ENCODE measurements at regions of chr7 and their contacts with region 1.

Region 1: DNA sequence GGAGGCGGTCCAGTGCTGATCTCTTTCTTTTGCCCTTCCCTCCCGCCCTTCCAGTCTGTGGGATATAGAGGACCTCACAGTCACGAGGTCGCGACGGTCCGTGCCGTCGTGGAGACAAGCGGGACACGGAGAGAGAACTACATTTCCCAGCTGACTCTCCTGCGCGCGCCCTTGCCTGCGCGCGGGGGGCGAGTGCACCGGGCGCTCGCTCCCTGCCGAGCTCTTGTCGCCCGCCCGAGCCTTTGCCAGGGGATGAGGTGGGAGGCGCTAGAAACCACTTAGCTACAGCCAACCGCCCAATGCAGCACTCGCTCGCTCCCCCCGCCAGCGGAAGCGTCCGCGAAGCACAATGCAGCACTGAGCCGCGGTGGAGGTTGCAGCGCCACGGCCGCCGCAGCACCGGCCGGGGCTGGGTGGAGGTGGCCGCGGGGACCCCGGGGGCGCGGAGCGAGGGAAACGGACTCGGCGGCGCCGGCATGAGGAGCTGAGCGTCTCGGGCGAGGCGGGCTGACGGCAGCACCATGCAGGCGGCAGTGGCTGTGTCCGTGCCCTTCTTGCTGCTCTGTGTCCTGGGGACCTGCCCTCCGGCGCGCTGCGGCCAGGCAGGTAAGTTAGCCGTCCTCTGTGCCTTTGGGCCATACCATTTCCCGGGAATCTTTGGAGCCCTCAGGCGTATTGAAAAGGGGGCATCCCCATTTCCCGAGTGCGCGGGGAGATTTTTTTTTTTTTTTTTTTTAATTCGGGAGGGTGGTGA is at the start of gene ADAM22:
- DNase-seq: peak; percentile 49 to 80 (median 74)
- ATAC-seq: peak; percentile 96
- H3K4me3 ChIP-seq: peak within 1 kb of the TSS; percentile 80
- H3K4me3 Mint-ChIP-seq: peak within 1 kb of the TSS; percentile 84 to 93 (median 91)
- H3K27ac ChIP-seq: peak within 1 kb of the TSS; percentile 19
- H3K27ac Mint-ChIP-seq: peak within 1 kb of the TSS in 7 of 9 donors; percentile 13 to 82 (median 65)
- H3K4me1 ChIP-seq: peaks cover 4 to 6% of the 10 kb centered on the region in 2 donors
- H3K4me1 Mint-ChIP-seq: peaks cover 0 to 21% (median 12%) of the 10 kb centered on the region in 7 donors
- H3K27me3 ChIP-seq: no peaks in the 10 kb centered on the region
- H3K27me3 Mint-ChIP-seq: peaks cover 0 to 54% (median 4%) of the 10 kb centered on the region in 5 donors
- total RNA-seq, gene ADAM22: 1.1 to 7.1 (median 3.1) TPM

Region 2: DNA sequence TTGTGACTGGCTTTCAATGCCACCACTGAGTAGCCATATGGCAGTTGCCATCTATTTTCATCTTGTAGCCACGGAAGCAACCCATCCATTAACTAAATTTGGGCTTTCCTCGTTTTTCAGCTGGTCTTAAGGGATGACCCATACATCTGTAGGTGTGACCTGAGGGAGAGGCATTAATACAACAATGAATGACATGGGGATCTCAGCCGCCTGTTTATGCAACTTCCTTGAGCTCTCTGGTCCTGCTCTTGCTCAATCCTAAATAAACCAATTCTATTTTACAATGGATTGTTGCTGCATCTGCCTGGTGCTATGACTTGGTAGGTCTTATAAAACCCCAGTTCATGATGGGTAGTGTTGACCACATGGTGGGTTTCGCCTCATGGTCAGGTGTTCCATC is 22.0 kb before region 1 on chr7:
- CTCF ChIA-PET with region 1: no interaction called
- POLR2A ChIA-PET with region 1: no interaction called
- intact Hi-C with region 1: loop called in 1 of 2 experiments (anchors 2 kb)
- DNase-seq: no peak
- ATAC-seq: no peak
- H3K4me3 ChIP-seq: no peak overlapping the region
- H3K4me3 Mint-ChIP-seq: no peak overlapping the region
- H3K27ac ChIP-seq: no peak overlapping the region
- H3K27ac Mint-ChIP-seq: no peak overlapping the region
- H3K4me1 ChIP-seq: no peaks in the 10 kb centered on the region
- H3K4me1 Mint-ChIP-seq: peaks cover 0 to 5% (median 3%) of the 10 kb centered on the region in 7 donors
- H3K27me3 ChIP-seq: peaks cover 0 to 3% of the 10 kb centered on the region in 2 donors
- H3K27me3 Mint-ChIP-seq: peaks cover 0 to 12% (median 0%) of the 10 kb centered on the region in 5 donors

Region 3: GRCh38 chr7:88090671-88091070 is 156.5 kb after region 1 on chr7:
- CTCF ChIA-PET with region 1: no interaction called
- POLR2A ChIA-PET with region 1: no interaction called
- intact Hi-C with region 1: no loop called
- DNase-seq: no peak
- ATAC-seq: no peak
- H3K4me3 ChIP-seq: no peak overlapping the region
- H3K4me3 Mint-ChIP-seq: no peak overlapping the region
- H3K27ac ChIP-seq: no peak overlapping the region
- H3K27ac Mint-ChIP-seq: no peak overlapping the region
- H3K4me1 ChIP-seq: peaks cover 3 to 5% of the 10 kb centered on the region in 2 donors
- H3K4me1 Mint-ChIP-seq: peaks cover 0 to 31% (median 12%) of the 10 kb centered on the region in 7 donors
- H3K27me3 ChIP-seq: no peaks in the 10 kb centered on the region
- H3K27me3 Mint-ChIP-seq: peaks cover 0 to 4% (median 0%) of the 10 kb centered on the region in 5 donors

Region 4: DNA sequence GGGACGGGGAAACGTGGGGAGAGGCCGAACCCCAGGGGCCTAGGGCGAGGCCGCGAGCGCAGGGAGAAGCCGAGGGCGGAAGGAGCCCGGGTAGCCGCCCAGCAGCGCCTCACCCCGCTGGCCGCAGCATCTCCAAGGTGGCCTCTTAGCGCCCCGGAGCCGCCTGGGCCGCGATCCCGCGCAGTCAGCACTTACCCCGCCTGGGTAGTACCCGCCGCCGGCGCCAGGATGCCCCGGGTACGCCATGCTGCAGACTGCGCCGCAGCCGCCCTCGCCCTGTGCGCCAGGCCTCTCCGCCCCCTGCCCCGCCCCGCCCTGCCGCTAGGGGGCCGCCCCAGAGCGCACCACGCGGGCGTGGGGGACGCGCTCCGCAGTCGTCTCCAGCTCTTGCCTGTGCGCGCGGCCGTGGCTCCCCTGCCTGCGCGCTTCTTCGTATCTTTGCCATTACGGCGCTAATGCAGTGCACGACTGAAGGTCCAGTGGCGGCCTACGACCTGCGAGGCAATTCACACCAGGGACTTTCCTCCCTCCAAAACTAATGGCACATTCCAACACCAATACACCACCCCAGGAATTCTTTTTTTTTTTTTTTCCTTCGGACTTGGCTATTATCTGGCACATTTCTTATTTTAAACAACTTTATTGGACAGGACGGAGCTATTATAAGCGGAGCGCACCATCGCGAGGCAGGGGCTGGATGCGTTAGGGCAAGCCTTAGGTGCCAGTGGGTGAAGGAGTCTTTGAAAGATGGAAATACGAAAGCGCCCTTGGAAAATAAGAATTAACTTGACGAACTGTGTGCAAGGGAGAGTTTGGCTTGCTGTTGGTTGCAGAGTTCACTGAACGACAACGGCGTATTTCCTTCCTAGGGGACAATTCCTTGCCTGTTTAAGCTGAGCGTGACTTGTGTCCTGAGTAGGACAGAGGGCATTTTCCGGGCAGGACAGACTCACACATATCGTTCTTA is 285.9 kb after region 1 on chr7 and contains the start of gene SRI:
- CTCF ChIA-PET with region 1: no interaction called
- POLR2A ChIA-PET with region 1: no interaction called
- intact Hi-C with region 1: loop called (anchors 1 to 5 kb)
- DNase-seq: peak; percentile 85 to 95 (median 93)
- ATAC-seq: peak; percentile 98
- H3K4me3 ChIP-seq: peak within 1 kb of the TSS; percentile 97
- H3K4me3 Mint-ChIP-seq: peak within 1 kb of the TSS; percentile 95 to 99 (median 96)
- H3K27ac ChIP-seq: peak within 1 kb of the TSS; percentile 86
- H3K27ac Mint-ChIP-seq: peak within 1 kb of the TSS; percentile 90 to 99 (median 94)
- H3K4me1 ChIP-seq: peaks cover 15 to 18% of the 10 kb centered on the region in 2 donors
- H3K4me1 Mint-ChIP-seq: peaks cover 13 to 42% (median 34%) of the 10 kb centered on the region in 7 donors
- H3K27me3 ChIP-seq: peaks cover 0 to 4% of the 10 kb centered on the region in 2 donors
- H3K27me3 Mint-ChIP-seq: peaks cover 0 to 8% (median 0%) of the 10 kb centered on the region in 5 donors
- total RNA-seq, gene SRI: 39.9 to 131 (median 60.0) TPM

Measured in naive thymus-derived CD4-positive, alpha-beta T cell (primary cell).